Left cardiac atrium (tissue), 4 donors: ENCODE measurements at regions of chr2 and their contacts with region 1.

Region 1: GRCh38 chr2:207769597-207770486 is at the start of gene FZD5:
- DNase-seq: peak; percentile 97
- ATAC-seq: peak; percentile 92 to 94
- total RNA-seq, gene FZD5: 4.9 to 5.0 TPM

Region 2: GRCh38 chr2:207974216-207974605 is 204.4 kb after region 1 on chr2:
- intact Hi-C with region 1: loop called (anchors 2 to 5 kb)
- DNase-seq: no peak
- ATAC-seq: peak in 1 of 2 donors; percentile 85

Region 3: DNA sequence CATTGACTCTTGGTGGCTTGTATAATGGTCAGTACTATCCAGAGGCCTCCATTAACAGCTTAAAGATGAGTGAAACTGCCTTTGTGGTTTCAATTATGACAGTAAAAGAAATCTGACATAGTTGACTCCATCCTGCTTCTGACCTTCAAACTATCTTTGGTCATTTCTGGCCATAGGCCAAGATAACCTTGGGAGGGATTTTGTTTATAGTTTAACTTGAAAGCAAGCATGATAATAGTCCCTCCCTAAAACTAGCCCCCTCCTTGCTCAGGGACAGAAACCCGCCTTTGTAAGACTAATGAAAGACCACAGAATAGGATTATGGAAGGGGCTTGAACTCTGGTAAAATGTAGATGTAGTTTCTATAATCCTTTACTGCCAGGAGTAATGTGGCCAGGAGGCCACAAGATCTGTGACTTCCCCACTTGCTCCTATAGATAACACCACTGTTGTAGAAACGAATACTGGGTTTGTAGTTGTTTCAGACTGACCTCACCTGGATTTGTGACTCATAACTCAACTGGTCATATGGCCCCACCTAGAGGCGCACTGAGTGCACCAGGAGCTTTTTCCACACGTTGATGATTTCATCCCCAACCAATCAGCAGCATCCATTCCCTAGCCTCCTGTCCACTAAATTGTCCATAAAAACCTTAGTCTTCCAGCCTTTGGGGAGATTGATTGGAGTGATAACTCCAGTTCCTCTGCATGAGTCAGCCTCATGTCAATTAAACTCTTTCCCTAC is 264.1 kb after region 1 on chr2:
- intact Hi-C with region 1: loop called (anchors 5 to 10 kb)
- DNase-seq: no peak
- ATAC-seq: peak; percentile 65 to 74